Keratinocyte (primary cell): ENCODE measurements at regions of chr2 and their contacts with region 1.

Region 1: GRCh38 chr2:218924757-218925156 is 34.7 kb upstream of the CDK5R2 start:
- DNase-seq: no peak
- H3K4me3 ChIP-seq: no peak overlapping the region
- H3K27ac ChIP-seq: no peak overlapping the region
- H3K4me1 ChIP-seq: no peaks in the 10 kb centered on the region
- H3K27me3 ChIP-seq: peaks cover 17% of the 10 kb centered on the region
- CTCF ChIP-seq: no peak

Region 2: DNA sequence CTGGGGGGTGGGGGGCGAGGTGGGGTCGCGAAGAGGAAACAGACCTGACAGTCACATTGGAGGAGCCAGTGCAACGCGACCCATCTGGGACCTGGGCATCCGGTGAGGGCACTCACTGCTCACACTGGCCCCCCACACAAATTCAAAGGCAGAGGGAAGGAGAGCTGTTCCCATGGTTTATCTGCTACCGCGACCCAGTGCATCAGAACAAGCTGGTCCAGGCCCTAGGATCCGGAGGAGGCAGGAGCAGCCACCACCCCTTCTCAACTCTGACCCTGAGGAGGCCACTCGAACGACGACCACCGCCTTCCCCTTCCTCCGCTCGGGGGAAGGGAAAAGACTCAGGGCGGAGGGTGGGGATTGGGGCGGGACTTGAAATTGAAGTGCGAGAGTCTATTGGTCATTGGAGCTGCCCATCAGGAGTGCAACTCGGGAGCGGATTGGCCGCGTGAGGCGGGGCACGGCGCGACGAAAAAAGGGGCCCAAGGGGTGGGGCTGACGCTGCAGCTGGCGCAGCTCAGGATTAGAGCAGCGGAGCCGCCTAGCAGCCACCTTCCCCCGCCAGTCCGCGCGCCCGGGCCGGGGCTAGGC is 34.5 kb after region 1 on chr2 and contains the start of gene CDK5R2:
- dilution Hi-C with region 1: loop called (anchors 5 kb)
- DNase-seq: peak; percentile 23
- H3K4me3 ChIP-seq: peak within 1 kb of the TSS; percentile 37 to 54 (median 37)
- H3K27ac ChIP-seq: no peak within 1 kb of the TSS
- H3K4me1 ChIP-seq: peaks cover 8% of the 10 kb centered on the region
- H3K27me3 ChIP-seq: peaks cover 62% of the 10 kb centered on the region
- CTCF ChIP-seq: no peak
- polyA plus RNA-seq, gene CDK5R2: 0.03 TPM in 2 of 3 replicates, not detected in the other

Region 3: DNA sequence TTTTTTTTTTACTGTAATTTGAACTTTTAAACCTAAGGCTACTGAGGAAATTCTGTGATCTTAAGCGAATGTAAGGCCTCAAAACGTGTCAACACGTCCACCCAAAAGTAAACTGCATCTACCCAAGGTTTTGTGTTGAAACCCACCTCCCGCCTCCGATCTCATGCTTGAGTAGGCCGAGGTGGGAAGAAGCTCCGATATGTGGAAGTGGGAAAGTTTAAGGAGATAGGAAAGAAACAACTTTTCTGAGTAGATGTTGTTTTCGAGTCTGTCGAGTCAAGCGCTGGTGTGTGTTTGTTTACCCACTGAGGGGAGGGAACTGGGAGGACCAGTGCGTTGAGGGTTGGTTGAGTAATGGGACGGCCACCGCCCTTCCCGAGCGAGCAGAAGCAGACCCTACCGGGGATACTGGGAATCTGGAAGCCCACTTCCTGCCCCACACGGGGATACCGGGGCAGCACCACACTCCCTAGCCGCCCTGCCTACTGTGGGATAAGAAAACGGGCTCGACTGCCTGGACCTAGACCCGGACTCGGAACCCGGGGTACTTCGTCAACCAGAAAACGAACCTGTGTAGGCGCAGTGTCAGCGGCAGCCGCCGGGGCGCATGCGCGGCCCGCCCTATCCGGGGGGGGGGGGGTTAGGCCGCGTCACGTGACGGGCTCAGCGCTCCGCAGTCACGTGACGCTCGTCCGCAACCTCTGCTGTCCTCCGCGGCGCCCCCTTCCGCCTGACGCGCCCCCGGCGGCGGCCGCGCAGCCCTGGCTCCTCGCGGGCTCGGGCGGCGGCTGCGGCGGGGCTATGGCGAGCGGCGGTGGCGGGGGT is 253.0 kb after region 1 on chr2 and contains the start of gene RETREG2:
- dilution Hi-C with region 1: no loop called
- DNase-seq: peak; percentile 59
- H3K4me3 ChIP-seq: peak within 1 kb of the TSS; percentile 81 to 90 (median 85)
- H3K27ac ChIP-seq: peak within 1 kb of the TSS; percentile 98
- H3K4me1 ChIP-seq: peaks cover 20% of the 10 kb centered on the region
- H3K27me3 ChIP-seq: no peaks in the 10 kb centered on the region
- CTCF ChIP-seq: peak in 1 of 3 experiments; percentile 71
- polyA plus RNA-seq, gene RETREG2: 45.8 to 54.9 TPM (median 51.3 TPM) in 3 replicates